ENCODE measurements at regions of chr17 and their contacts with region 1.

Region 1: GRCh38 chr17:56939901-56940343 is 20.9 kb downstream of the COIL start:
- DNase-seq: no peak
- H3K4me3 ChIP-seq: no peak overlapping the region
- H3K27ac ChIP-seq: no peak overlapping the region
- H3K27me3 ChIP-seq: no peaks in the 10 kb centered on the region
- CTCF ChIP-seq: peak; percentile 51 to 82 (median 70)

Region 2: GRCh38 chr17:56786989-56787482 is 152.9 kb before region 1 on chr17:
- intact Hi-C with region 1: no loop called
- DNase-seq: no peak
- H3K4me3 ChIP-seq: no peak overlapping the region
- H3K27ac ChIP-seq: no peak overlapping the region
- H3K27me3 ChIP-seq: peaks cover 0 to 6% (median 0%) of the 10 kb centered on the region in 45 donors
- CTCF ChIP-seq: no peak

Region 3: GRCh38 chr17:56819431-56820145 is 120.3 kb before region 1 on chr17:
- intact Hi-C with region 1: loop called (anchors 2 to 5 kb)
- DNase-seq: peak in 5 of 10 donors; percentile 14 to 54 (median 46)
- H3K4me3 ChIP-seq: peak overlapping the region in 1 of 59 donors; percentile 8
- H3K27ac ChIP-seq: no peak overlapping the region
- H3K27me3 ChIP-seq: no peaks in the 10 kb centered on the region
- CTCF ChIP-seq: peak; percentile 76 to 96 (median 89)

Measured in dorsolateral prefrontal cortex (tissue), 120 donors.